ENCODE measurements at regions of chr9 and their contacts with region 1.

Region 1: GRCh38 chr9:124708633-124709291 is 62.3 kb downstream of the NR6A1 start:
- DNase-seq: no peak
- ATAC-seq: peak in 1 of 4 donors; percentile 24
- H3K4me3 ChIP-seq: no peak overlapping the region
- H3K27ac ChIP-seq: no peak overlapping the region
- H3K4me1 ChIP-seq: peaks cover 10% of the 10 kb centered on the region
- H3K27me3 ChIP-seq: no peaks in the 10 kb centered on the region
- CTCF ChIP-seq: no peak

Region 2: DNA sequence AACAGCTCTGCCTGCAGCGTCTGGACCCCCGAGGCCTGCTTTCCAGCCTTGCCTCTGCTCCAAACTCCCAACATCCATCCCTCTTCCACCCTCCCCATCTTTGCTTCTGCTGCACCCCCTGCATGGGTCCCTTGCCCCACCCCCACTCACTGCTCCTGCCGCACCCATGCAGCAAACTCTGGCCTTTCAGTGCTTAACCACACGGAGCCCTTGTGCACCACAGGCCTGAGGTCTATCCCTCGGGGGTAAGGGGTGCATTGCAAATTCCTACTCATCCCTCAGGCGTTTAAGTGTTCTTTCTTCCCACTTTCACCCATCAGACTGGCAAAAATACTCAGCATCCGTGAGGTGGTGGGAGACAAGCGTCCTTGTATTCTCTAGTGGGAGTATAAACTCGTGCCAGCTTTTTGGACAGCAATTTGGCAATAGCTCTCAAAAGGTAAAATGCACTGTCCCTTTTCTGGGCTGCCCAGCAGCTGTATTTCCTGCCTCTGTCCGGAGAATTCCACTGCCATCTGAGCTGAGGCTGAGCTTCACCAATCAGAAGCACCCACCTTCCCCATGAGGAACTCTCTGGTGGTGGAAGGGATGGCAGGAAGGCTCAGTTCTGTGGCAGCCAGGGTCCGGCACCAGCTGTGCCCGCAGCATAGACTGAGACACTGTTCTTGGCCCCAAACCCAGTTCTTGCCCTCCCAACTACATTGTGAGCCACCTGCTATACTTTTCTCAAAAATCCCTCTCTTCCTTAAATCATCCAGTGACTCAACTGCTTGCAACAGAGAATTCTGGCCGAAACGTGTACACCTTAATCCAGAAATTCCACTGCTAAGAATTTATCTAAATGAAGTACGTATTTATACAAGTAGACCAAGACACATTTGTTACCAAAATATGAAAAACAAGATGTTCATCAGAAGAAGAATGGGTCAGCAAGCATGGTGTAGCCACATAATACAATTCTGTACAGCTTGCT is 308.5 kb before region 1 on chr9:
- intact Hi-C with region 1: no loop called
- DNase-seq: no peak
- ATAC-seq: peak; percentile 10 to 24 (median 20)
- H3K4me3 ChIP-seq: no peak overlapping the region
- H3K27ac ChIP-seq: peak overlapping the region; percentile 86
- H3K4me1 ChIP-seq: peaks cover 56% of the 10 kb centered on the region
- H3K27me3 ChIP-seq: no peaks in the 10 kb centered on the region
- CTCF ChIP-seq: no peak

Region 3: GRCh38 chr9:124549016-124549415 is 159.7 kb before region 1 on chr9:
- intact Hi-C with region 1: no loop called
- DNase-seq: no peak
- ATAC-seq: no peak
- H3K4me3 ChIP-seq: no peak overlapping the region
- H3K27ac ChIP-seq: no peak overlapping the region
- H3K4me1 ChIP-seq: no peaks in the 10 kb centered on the region
- H3K27me3 ChIP-seq: no peaks in the 10 kb centered on the region
- CTCF ChIP-seq: no peak

Region 4: GRCh38 chr9:124617471-124618141 is 91.2 kb before region 1 on chr9:
- intact Hi-C with region 1: loop called (anchors 1 to 2 kb)
- DNase-seq: peak; percentile 75 to 85
- ATAC-seq: peak; percentile 90 to 97 (median 94)
- H3K4me3 ChIP-seq: no peak overlapping the region
- H3K27ac ChIP-seq: no peak overlapping the region
- H3K4me1 ChIP-seq: peaks cover 9% of the 10 kb centered on the region
- H3K27me3 ChIP-seq: no peaks in the 10 kb centered on the region
- CTCF ChIP-seq: peak; percentile 93

Region 5: DNA sequence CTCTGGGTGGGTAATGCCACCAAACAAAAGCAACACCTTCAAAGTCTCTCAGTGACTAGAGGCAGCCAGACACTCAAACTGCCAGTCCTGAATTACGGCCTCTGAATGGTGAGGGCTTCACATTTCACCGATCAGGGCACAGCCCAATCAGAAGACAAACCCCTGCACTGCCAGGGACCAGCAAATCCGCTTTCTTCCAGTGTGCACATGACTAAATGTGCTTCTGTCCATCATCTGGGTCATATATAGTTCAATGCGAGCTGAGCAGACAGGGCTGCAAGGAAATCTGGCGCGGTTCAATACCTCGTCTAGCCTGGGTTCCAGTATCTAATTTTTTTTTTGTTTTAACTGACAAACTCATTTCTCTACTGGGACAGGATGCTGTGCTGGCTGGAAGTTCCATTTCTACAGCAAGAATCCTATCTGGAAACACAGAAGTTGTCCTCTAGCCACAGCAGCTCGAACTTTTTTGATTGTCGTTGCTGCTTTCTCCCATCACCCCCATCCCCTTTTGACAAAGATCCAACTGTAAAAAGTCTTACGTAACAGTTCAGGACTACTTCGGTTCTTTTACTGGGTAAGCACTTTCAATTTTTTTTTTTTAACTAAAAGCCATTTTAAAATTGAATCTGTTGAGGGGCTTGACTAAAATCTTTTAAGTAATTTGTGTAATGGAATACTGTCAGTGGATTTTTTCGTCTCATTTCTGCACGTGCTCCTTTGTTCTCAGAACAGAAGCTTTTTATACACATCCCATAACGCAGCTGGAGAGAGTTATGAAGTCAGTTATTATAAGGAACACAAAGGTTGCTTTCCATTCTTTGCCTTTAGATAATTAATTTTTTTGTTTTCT is 50.4 kb before region 1 on chr9:
- intact Hi-C with region 1: loop called in 1 of 2 experiments (anchors 5 kb)
- DNase-seq: peak; percentile 58 to 75
- ATAC-seq: peak; percentile 94 to 96 (median 94)
- H3K4me3 ChIP-seq: peak overlapping the region; percentile 74
- H3K27ac ChIP-seq: peak overlapping the region; percentile 80
- H3K4me1 ChIP-seq: peaks cover 49% of the 10 kb centered on the region
- H3K27me3 ChIP-seq: no peaks in the 10 kb centered on the region
- CTCF ChIP-seq: no peak

Region 6: GRCh38 chr9:124743686-124744348 is 35.1 kb after region 1 on chr9:
- intact Hi-C with region 1: no loop called
- DNase-seq: no peak
- ATAC-seq: no peak
- H3K4me3 ChIP-seq: no peak overlapping the region
- H3K27ac ChIP-seq: no peak overlapping the region
- H3K4me1 ChIP-seq: no peaks in the 10 kb centered on the region
- H3K27me3 ChIP-seq: no peaks in the 10 kb centered on the region
- CTCF ChIP-seq: no peak

Measured in psoas muscle (tissue), 8 donors.